GM12878 (cell line): ENCODE measurements at regions of chr6 and their contacts with region 1.

Region 1: GRCh38 chr6:12911387-12911960 is 194.9 kb downstream of the PHACTR1 start:
- DNase-seq: no peak
- ATAC-seq: no peak
- H3K4me3 ChIP-seq: no peak overlapping the region
- H3K27ac ChIP-seq: no peak overlapping the region
- H3K4me1 ChIP-seq: no peaks in the 10 kb centered on the region
- H3K27me3 ChIP-seq: no peaks in the 10 kb centered on the region
- CTCF ChIP-seq: peak; percentile 31 to 51 (median 48); a peak in 5 of 6 replicates
- EP300 ChIP-seq: no peak
- POLR2A ChIP-seq: no peak
- RAD21 ChIP-seq: peak; percentile 77

Region 2: GRCh38 chr6:12849413-12850198 is 61.9 kb before region 1 on chr6:
- CTCF ChIA-PET with region 1: no interaction called
- POLR2A ChIA-PET with region 1: no interaction called
- RAD21 ChIA-PET with region 1: no interaction called
- SMC1A ChIA-PET with region 1: no interaction called
- in situ Hi-C with region 1: no loop called
- intact Hi-C with region 1: no loop called
- DNase-seq: no peak
- ATAC-seq: no peak
- H3K4me3 ChIP-seq: no peak overlapping the region
- H3K27ac ChIP-seq: no peak overlapping the region
- H3K4me1 ChIP-seq: no peaks in the 10 kb centered on the region
- H3K27me3 ChIP-seq: peaks cover 0 to 1% of the 10 kb centered on the region in 2 experiments; a peak in 1 of 4 replicates
- CTCF ChIP-seq: no peak
- EP300 ChIP-seq: no peak
- POLR2A ChIP-seq: no peak
- RAD21 ChIP-seq: no peak

Region 3: GRCh38 chr6:13183415-13184088 is 272.1 kb after region 1 on chr6:
- CTCF ChIA-PET with region 1: interaction called, 3 read pairs
- POLR2A ChIA-PET with region 1: no interaction called
- RAD21 ChIA-PET with region 1: no interaction called
- SMC1A ChIA-PET with region 1: no interaction called
- in situ Hi-C with region 1: no loop called
- intact Hi-C with region 1: loop called (anchors 10 kb)
- DNase-seq: no peak
- ATAC-seq: no peak
- H3K4me3 ChIP-seq: no peak overlapping the region
- H3K27ac ChIP-seq: no peak overlapping the region
- H3K4me1 ChIP-seq: no peaks in the 10 kb centered on the region
- H3K27me3 ChIP-seq: peaks cover 2 to 3% of the 10 kb centered on the region in 2 experiments; a peak in 2 of 4 replicates
- CTCF ChIP-seq: no peak
- EP300 ChIP-seq: no peak
- POLR2A ChIP-seq: no peak
- RAD21 ChIP-seq: no peak